ENCODE measurements at regions of chr2 and their contacts with region 1.

Region 1: GRCh38 chr2:65169760-65170136 is 39.8 kb upstream of the RAB1A start:
- DNase-seq: no peak
- H3K4me3 ChIP-seq: no peak overlapping the region
- H3K27ac ChIP-seq: no peak overlapping the region
- H3K4me1 ChIP-seq: no peaks in the 10 kb centered on the region
- H3K27me3 ChIP-seq: peaks cover 0 to 4% of the 10 kb centered on the region in 2 experiments
- CTCF ChIP-seq: no peak
- POLR2A ChIP-seq: no peak

Region 2: GRCh38 chr2:64978514-64979268 is 191.1 kb before region 1 on chr2:
- CTCF ChIA-PET with region 1: interaction called, 16 read pairs
- POLR2A ChIA-PET with region 1: no interaction called
- dilution Hi-C with region 1: no loop called
- intact Hi-C with region 1: no loop called
- DNase-seq: peak; percentile 30
- H3K4me3 ChIP-seq: no peak overlapping the region
- H3K27ac ChIP-seq: no peak overlapping the region
- H3K4me1 ChIP-seq: peaks cover 7% of the 10 kb centered on the region
- H3K27me3 ChIP-seq: peaks cover 0 to 2% of the 10 kb centered on the region in 2 experiments
- CTCF ChIP-seq: peak in 1 of 2 donors; percentile 22
- POLR2A ChIP-seq: no peak